GM12878 (cell line): ENCODE measurements at regions of chr5 and their contacts with region 1.

Region 1: DNA sequence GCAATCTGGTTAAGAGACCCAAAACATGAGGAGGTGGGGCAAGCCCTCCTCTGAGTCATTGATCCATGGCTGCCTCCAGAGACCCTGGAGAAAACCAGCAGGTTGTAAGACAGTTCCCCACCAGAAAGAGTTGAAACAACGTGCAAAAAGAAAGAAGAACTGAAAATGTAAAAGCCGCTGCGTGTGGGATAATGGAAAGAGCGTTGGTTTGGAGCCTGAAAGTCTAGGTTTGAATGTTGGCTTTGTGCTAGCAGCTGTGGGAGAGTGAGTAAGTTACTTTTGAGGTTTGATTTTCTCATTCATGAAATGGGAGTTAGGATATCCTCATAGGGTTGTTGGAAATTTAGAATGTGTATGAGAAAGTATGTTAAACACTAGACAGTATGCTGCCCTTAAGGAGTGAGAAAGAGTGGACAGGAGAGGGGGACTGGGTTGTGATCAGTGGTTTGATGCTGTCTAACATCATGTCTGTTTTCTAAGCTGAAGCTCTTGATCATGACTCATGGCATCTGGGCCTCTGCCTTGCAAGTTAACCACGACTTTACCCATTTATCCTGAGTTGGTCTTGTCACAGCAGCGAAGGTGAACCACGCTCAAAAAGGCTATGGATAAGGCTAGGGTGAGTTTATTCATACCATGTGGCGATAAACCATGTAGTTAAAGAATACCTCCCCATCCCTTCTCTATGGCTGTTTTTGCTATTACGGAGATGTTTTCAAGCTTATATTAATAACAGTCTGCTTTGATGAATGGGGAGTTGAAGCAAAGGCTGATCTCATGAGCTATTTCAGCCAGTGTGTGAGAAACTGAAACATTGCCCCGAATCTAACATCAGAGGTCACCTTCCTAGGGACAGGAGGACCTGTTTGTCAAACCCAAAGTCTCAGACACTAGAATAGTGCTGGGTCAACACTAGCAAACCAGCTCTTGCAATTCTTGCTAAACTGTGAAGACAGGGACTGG is 41.3 kb downstream of the ZNF366 start:
- DNase-seq: peak; percentile 92
- ATAC-seq: peak; percentile 83
- H3K4me3 ChIP-seq: peak overlapping the region; percentile 43
- H3K27ac ChIP-seq: peak overlapping the region; percentile 98
- H3K4me1 ChIP-seq: peaks cover 44% of the 10 kb centered on the region
- H3K27me3 ChIP-seq: no peaks in the 10 kb centered on the region
- CTCF ChIP-seq: no peak
- EP300 ChIP-seq: peak; percentile 85 to 92
- POLR2A ChIP-seq: peak; percentile 39; the same call in 1 of the 2 replicates
- RAD21 ChIP-seq: peak; percentile 35; the same call in 1 of the 2 replicates

Region 2: GRCh38 chr5:72301557-72301956 is 164.3 kb before region 1 on chr5:
- CTCF ChIA-PET with region 1: interaction called, 3 read pairs
- POLR2A ChIA-PET with region 1: interaction called, 3 read pairs
- RAD21 ChIA-PET with region 1: no interaction called
- SMC1A ChIA-PET with region 1: no interaction called
- in situ Hi-C with region 1: no loop called
- intact Hi-C with region 1: loop called (anchors 5 kb)
- DNase-seq: no peak
- ATAC-seq: peak; percentile 58
- H3K4me3 ChIP-seq: peak overlapping the region; percentile 16; the same call in 1 of the 2 replicates
- H3K27ac ChIP-seq: peak overlapping the region; percentile 62
- H3K4me1 ChIP-seq: peaks cover 59% of the 10 kb centered on the region
- H3K27me3 ChIP-seq: no peaks in the 10 kb centered on the region
- CTCF ChIP-seq: no peak
- EP300 ChIP-seq: no peak
- POLR2A ChIP-seq: peak; percentile 57; the same call in 1 of the 2 replicates
- RAD21 ChIP-seq: no peak

Region 3: DNA sequence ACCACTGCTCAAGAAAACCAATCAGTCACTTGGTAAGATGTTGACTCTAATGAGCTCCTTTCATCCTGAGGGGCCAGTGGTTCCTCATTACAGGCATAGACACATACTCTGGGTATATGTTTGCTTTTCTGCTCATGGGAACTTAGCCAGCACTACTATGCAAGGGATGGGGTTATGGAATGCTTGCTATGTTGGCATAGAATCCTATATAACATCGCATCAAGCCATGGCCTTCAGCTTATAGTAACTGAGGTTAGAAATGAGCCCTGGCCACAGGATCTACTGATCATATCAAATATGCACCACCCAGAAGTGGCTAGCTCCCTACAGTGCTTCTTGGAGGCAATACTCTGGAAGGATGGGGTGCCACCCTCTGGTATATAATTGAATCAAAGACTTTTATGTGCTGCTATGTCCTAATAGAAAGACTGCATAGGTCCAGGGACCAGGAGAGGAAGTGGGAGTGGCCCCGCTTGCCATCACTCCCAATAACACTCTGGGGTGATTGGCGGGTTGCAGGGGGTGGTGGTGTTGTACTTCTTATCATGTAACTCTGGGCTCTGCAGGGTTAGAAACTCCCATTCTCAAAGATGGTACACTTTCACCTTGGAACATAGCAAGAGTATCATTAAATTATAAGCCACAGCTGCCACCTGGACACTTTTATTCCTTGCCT is 28.9 kb before region 1 on chr5:
- CTCF ChIA-PET with region 1: interaction called, 7 read pairs
- POLR2A ChIA-PET with region 1: interaction called, 5 read pairs
- RAD21 ChIA-PET with region 1: interaction called, 24 read pairs
- SMC1A ChIA-PET with region 1: interaction called, 68 read pairs
- in situ Hi-C with region 1: no loop called
- intact Hi-C with region 1: loop called (anchors 5 kb)
- DNase-seq: no peak
- ATAC-seq: no peak
- H3K4me3 ChIP-seq: no peak overlapping the region
- H3K27ac ChIP-seq: no peak overlapping the region
- H3K4me1 ChIP-seq: peaks cover 41% of the 10 kb centered on the region
- H3K27me3 ChIP-seq: no peaks in the 10 kb centered on the region
- CTCF ChIP-seq: no peak
- EP300 ChIP-seq: no peak
- POLR2A ChIP-seq: no peak
- RAD21 ChIP-seq: no peak

Region 4: DNA sequence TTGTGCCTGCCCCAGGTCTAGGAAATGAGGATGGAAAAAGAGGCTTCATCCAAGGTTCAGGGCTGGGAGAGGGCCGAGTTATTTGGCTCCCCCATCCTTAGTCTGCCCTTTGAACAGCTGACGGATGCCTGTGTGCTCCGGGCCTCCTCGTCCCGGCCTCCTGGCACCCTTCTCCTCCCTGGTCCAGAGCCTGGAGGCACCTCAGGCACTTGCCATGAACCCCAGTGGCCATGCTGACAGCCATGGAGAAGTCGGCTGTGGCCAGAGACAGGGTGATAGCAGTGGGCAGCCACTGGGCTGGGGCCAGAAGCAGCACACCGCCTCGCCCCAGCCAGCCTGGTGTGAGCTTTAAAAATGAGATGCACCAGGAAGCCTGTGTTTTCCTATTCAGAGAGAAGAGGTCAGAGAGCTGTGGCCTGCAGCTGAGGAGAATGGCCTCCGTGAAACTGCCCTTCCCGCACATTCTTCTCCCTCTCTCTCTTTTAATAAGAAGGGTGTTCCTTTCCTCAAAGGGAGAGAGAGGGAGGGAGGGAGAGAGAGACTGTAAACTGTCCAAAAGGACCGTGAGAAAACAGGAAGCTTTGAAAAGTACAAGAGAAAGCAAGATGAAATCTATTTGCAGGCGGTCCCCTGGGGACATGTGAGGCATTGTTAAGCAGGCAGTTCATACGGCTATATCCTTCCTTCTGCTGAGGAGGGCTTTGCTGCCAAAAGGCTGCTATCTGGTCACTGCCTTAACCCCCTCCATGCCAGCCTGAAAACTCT is 14.0 kb before region 1 on chr5:
- CTCF ChIA-PET with region 1: interaction called, 11 read pairs
- POLR2A ChIA-PET with region 1: interaction called, 36 read pairs
- RAD21 ChIA-PET with region 1: interaction called, 31 read pairs
- SMC1A ChIA-PET with region 1: interaction called, 141 read pairs
- in situ Hi-C with region 1: no loop called
- intact Hi-C with region 1: loop called (anchors 1 kb)
- DNase-seq: peak; percentile 75
- ATAC-seq: peak; percentile 94
- H3K4me3 ChIP-seq: no peak overlapping the region
- H3K27ac ChIP-seq: peak overlapping the region; percentile 76
- H3K4me1 ChIP-seq: peaks cover 12% of the 10 kb centered on the region
- H3K27me3 ChIP-seq: no peaks in the 10 kb centered on the region
- CTCF ChIP-seq: no peak
- EP300 ChIP-seq: peak in 1 of 2 experiments; percentile 9; a peak in 1 of 4 replicates
- POLR2A ChIP-seq: no peak
- RAD21 ChIP-seq: no peak

Region 5: DNA sequence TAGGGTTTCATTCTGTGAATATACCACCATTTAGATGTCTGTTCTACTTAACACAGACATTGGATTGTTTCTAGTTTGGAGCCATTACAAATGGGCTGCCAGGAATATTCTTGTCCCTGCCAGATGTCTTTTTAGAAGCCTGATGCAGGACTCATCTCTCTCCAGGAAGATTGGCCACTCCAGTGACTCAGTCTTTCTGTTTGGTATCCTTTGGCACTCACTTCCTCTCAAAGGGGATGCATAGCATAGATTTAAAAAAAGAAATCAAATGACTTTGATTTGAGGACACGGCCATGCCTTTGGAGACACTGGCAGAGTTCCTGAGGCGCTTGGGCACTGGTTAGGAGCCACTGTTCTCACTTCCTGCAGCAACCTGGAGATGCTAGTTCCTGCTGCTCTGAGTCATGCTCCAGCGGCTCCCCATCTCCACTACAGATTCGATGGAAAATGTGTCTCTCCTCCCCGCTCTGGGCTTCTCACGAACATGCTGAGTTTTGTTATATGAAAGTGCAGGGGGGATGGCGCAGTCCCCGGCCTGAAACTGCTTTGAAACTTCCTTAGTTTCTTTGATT is 44.8 kb after region 1 on chr5:
- CTCF ChIA-PET with region 1: interaction called, 4 read pairs
- POLR2A ChIA-PET with region 1: interaction called, 9 read pairs
- RAD21 ChIA-PET with region 1: interaction called, 27 read pairs
- SMC1A ChIA-PET with region 1: interaction called, 55 read pairs
- in situ Hi-C with region 1: no loop called
- intact Hi-C with region 1: loop called (anchors 5 kb)
- DNase-seq: no peak
- ATAC-seq: no peak
- H3K4me3 ChIP-seq: no peak overlapping the region
- H3K27ac ChIP-seq: peak overlapping the region; percentile 33
- H3K4me1 ChIP-seq: peaks cover 45% of the 10 kb centered on the region
- H3K27me3 ChIP-seq: no peaks in the 10 kb centered on the region
- CTCF ChIP-seq: no peak
- EP300 ChIP-seq: no peak
- POLR2A ChIP-seq: no peak
- RAD21 ChIP-seq: no peak

Region 6: DNA sequence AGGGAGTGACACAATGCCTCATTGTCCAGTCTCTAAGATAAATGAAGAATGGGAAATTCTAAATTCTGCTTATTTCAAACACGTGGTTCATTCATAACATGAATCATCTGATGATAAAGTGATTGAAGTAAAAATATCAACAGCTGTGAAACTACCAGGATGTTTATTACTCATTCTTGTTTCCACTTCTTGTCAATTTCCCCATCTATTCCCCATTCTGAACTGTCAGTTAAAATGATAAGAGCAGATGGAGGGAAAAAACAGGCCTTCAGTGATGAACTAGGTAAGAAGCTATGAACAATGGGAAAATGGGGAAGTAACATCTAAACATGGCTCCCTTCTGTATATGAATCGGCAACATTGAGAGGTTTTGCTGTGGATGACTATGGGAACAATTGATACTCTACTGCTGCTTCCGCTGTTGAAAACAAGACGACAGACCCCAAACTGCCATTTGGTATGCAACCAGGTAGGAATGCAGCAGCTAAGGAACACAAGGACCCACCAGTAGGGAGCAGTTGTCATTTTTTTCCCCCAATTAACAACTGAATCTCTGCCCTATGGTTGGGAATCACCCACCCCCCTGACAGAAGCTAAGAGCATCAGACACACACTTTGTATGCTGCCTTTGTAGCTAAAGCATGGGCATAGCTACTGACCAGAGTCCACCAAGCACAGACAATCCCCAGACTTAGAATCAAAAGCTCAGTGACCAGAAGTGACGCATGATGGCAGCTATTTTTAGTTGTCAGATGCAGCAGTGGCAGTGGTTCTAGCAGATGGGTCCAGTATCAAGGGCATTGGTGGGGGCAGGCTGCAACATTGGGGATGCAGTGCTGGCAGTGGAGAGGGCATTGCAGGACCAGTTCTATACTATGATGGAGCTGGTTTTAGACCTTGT is 94.2 kb after region 1 on chr5:
- CTCF ChIA-PET with region 1: no interaction called
- POLR2A ChIA-PET with region 1: no interaction called
- RAD21 ChIA-PET with region 1: no interaction called
- SMC1A ChIA-PET with region 1: no interaction called
- in situ Hi-C with region 1: no loop called
- intact Hi-C with region 1: no loop called
- DNase-seq: no peak
- ATAC-seq: no peak
- H3K4me3 ChIP-seq: no peak overlapping the region
- H3K27ac ChIP-seq: no peak overlapping the region
- H3K4me1 ChIP-seq: peaks cover 3% of the 10 kb centered on the region
- H3K27me3 ChIP-seq: no peaks in the 10 kb centered on the region
- CTCF ChIP-seq: no peak
- EP300 ChIP-seq: no peak
- POLR2A ChIP-seq: no peak
- RAD21 ChIP-seq: no peak

Region 7: GRCh38 chr5:72920690-72921502 is 455.0 kb after region 1 on chr5:
- CTCF ChIA-PET with region 1: no interaction called
- POLR2A ChIA-PET with region 1: no interaction called
- RAD21 ChIA-PET with region 1: no interaction called
- SMC1A ChIA-PET with region 1: no interaction called
- in situ Hi-C with region 1: no loop called
- intact Hi-C with region 1: no loop called
- DNase-seq: no peak
- ATAC-seq: peak; percentile 35; the same call in 1 of the 3 replicates
- H3K4me3 ChIP-seq: no peak overlapping the region
- H3K27ac ChIP-seq: no peak overlapping the region
- H3K4me1 ChIP-seq: no peaks in the 10 kb centered on the region
- H3K27me3 ChIP-seq: no peaks in the 10 kb centered on the region
- CTCF ChIP-seq: no peak; a peak in 1 of 6 replicates
- EP300 ChIP-seq: no peak
- POLR2A ChIP-seq: no peak
- RAD21 ChIP-seq: peak; percentile 31; the same call in 1 of the 2 replicates